ENCODE measurements at regions of chr2 and their contacts with region 1.

Region 1: DNA sequence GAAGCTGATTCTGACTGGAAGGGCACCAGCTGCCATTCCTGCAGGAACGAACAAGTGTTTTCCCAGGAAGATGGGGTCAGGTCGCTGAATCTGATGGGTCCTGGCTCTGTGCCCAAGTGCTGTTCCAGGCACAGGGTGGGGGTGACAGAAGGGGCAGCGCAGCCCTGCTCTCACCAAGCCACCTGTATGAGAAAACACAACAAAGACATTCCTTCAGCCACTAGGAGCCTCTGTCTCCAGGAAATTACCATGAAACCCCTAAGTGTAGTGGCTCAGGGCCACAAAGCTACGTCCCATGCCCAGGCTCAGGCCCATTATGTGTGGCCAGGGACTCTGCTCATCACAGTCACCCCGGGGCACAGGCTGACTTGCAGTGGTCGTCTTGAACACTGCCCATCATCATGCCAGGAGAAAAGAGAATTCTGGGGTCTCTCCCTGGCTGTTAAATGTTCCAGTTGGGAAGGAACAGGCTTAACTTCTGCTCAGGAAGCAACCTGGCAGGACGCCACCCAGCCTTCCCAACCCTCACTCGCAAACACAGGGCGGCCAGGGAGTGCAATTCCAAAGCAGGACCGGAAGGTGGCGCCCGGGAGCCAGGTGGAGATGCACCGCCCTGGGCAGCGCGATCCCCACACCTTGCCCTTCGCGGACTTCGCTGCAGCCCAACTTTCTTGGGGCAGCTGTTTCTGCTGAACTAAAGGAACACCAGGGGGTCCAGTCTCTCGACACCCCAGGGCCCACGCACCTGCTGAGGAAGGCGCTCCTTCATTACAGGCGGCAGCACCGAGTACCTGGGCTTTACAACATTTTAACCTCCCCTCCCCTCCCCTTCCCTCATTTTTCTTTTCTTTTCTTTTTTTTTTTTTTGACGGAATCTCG is 11.0 kb upstream of the SFTPB start:
- DNase-seq: peak; percentile 82
- H3K4me3 Mint-ChIP-seq: no peak overlapping the region
- H3K27ac Mint-ChIP-seq: no peak overlapping the region
- H3K4me1 Mint-ChIP-seq: peaks cover 20% of the 10 kb centered on the region
- H3K27me3 Mint-ChIP-seq: peaks cover 35% of the 10 kb centered on the region

Region 2: GRCh38 chr2:85635636-85636035 is 43.4 kb before region 1 on chr2:
- CTCF ChIA-PET with region 1: interaction called, 17 read pairs
- DNase-seq: no peak
- H3K4me3 Mint-ChIP-seq: no peak overlapping the region
- H3K27ac Mint-ChIP-seq: peak overlapping the region; percentile 5
- H3K4me1 Mint-ChIP-seq: peaks cover 4% of the 10 kb centered on the region
- H3K27me3 Mint-ChIP-seq: no peaks in the 10 kb centered on the region

Region 3: GRCh38 chr2:85698184-85698879 is 19.3 kb after region 1 on chr2:
- CTCF ChIA-PET with region 1: interaction called, 18 read pairs
- DNase-seq: no peak
- H3K4me3 Mint-ChIP-seq: no peak overlapping the region
- H3K27ac Mint-ChIP-seq: no peak overlapping the region
- H3K4me1 Mint-ChIP-seq: peaks cover 19% of the 10 kb centered on the region
- H3K27me3 Mint-ChIP-seq: peaks cover 49% of the 10 kb centered on the region

Region 4: GRCh38 chr2:85707304-85707703 is 28.3 kb after region 1 on chr2:
- CTCF ChIA-PET with region 1: interaction called, 96 read pairs
- DNase-seq: peak; percentile 74
- H3K4me3 Mint-ChIP-seq: no peak overlapping the region
- H3K27ac Mint-ChIP-seq: peak overlapping the region; percentile 39
- H3K4me1 Mint-ChIP-seq: peaks cover 46% of the 10 kb centered on the region
- H3K27me3 Mint-ChIP-seq: peaks cover 41% of the 10 kb centered on the region

Region 5: DNA sequence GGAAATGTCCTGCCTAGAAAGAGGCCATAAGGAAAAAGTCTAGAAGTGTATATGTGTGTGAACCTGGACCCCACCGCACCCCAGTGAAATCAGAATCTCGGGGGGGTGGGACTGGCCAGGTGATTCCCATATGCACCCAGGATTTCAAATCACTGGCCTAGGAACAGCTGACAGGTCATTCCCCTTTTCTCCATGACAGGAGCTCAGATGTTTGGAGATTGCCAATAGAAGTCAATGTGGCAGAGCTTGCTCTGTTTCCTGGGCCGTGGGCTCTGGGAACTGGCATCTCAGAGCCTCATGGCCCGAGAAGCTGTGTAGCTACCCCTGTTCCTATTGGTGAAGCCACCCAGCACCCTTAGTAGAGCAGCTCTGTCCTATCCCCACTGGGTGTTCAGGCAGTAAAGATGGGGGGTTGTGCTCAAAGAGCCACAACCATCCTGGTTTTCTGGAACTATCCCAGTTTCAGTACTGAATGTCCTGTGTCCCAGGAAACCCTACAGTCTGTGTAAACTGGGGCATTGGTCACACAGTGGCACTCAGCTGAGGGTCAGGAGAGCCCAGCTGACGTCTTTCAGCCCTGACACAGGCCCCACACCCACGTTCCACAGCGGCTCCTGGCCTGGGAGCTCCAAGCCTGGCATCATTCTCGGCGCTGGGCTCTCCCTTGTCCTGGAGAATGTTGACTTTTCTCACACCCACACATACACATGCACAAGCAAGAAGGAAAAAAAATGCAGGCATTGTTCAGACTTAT is 34.0 kb after region 1 on chr2:
- CTCF ChIA-PET with region 1: interaction called, 96 read pairs
- DNase-seq: no peak
- H3K4me3 Mint-ChIP-seq: no peak overlapping the region
- H3K27ac Mint-ChIP-seq: peak overlapping the region; percentile 40
- H3K4me1 Mint-ChIP-seq: peaks cover 42% of the 10 kb centered on the region
- H3K27me3 Mint-ChIP-seq: peaks cover 42% of the 10 kb centered on the region

Region 6: DNA sequence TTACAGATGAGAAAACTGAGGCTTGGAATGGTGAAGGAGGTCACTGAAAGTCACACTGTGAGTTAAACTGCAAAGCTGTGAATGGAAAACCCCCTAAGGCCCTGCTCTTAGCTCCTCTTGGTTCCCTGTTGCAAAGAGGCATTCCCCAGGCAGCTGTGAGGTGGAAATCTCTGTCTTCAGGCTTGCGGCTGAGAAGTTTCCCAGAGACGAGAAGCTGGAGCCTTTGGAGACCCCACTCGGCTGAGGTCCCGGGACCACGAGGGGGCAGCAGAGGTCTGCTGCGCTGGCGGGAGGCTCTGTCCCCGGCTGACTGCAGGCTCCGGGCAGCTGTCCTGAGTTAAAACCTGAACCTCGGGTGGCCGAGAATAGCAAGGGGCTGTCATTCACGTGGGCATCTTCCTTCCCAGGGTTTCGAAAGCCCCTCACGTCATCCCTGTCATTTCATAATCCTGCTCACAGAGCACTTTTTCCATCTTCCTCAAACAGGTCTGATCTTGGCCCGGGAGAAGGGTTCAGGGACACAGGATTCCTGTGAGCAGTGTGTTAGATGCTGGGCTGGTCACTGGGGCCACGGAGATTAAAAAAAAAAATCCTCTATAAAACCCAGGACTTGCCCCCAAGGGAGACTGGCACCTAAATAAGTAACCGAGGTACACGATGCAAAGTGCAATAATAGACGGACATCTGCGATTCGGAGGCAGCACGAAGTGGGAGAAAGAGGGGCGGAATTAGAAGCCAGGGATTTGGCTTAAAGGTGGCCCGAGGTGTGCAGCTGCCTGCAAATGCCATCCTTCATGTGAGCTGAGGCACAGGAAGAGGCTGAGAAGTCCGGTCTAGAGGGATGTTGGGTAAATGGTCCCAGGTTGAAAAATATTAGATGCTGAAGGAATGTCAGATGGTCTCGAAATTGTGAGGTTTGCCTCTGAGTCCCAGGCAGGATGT is 50.1 kb after region 1 on chr2:
- CTCF ChIA-PET with region 1: interaction called, 14 read pairs
- DNase-seq: peak; percentile 82
- H3K4me3 Mint-ChIP-seq: no peak overlapping the region
- H3K27ac Mint-ChIP-seq: no peak overlapping the region
- H3K4me1 Mint-ChIP-seq: peaks cover 3% of the 10 kb centered on the region
- H3K27me3 Mint-ChIP-seq: peaks cover 66% of the 10 kb centered on the region

Measured in activated naive CD4-positive, alpha-beta T cell treated with anti-CD3 and anti-CD28 coated beads, Interleukin-2, amount 10 ng/mL, durations not matched to agents 7 days and 5 days (primary cell).